Activated naive CD4-positive, alpha-beta T cell treated with anti-CD3 and anti-CD28 coated beads for 36 hours (primary cell): ENCODE measurements at regions of chr11 and their contacts with region 1.

Region 1: DNA sequence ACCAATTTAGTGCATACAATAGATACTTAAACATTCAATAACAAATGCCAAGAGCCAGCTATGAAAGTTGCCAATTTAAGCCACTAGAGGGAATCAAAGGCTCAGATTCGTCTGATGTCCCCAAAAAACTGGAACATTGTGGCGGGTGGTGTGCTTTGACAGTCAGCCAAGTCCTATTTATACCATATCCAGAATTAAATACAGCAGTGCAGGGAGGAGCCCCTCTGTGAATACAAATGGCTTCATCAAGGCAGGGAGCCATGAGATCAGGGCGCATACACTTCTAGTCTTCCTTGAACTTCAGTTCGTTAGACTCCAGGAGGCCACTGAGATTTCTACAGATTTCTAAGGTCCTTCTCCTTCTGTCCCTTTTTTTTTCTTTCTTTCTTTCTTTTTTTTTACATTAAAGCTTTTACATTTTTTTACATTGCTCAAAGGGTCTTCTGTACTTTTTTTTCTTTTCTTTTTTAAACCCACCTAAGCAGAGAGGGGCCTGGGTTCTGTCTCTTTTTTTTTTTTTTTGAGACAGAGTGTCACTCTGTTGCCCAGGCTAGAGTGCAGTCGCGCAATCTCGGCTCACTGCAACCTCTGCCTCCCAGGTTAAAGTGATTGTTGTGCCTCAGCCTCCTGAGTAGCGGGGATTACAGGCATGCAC is 41.5 kb upstream of the HSPA8 start:
- DNase-seq: peak; percentile 55
- H3K4me3 Mint-ChIP-seq: no peak overlapping the region
- H3K27ac Mint-ChIP-seq: no peak overlapping the region
- H3K4me1 Mint-ChIP-seq: peaks cover 30% of the 10 kb centered on the region
- H3K27me3 Mint-ChIP-seq: no peaks in the 10 kb centered on the region

Region 2: GRCh38 chr11:123083623-123084029 is 19.8 kb before region 1 on chr11:
- CTCF ChIA-PET with region 1: interaction called, 21 read pairs
- intact Hi-C with region 1: loop called (anchors 1 kb)
- DNase-seq: peak; percentile 92
- H3K4me3 Mint-ChIP-seq: peak overlapping the region; percentile 45
- H3K27ac Mint-ChIP-seq: peak overlapping the region; percentile 73
- H3K4me1 Mint-ChIP-seq: peaks cover 71% of the 10 kb centered on the region
- H3K27me3 Mint-ChIP-seq: no peaks in the 10 kb centered on the region

Region 3: GRCh38 chr11:123091506-123091905 is 11.9 kb before region 1 on chr11:
- CTCF ChIA-PET with region 1: interaction called, 27 read pairs
- intact Hi-C with region 1: loop called (anchors 1 kb)
- DNase-seq: no peak
- H3K4me3 Mint-ChIP-seq: no peak overlapping the region
- H3K27ac Mint-ChIP-seq: no peak overlapping the region
- H3K4me1 Mint-ChIP-seq: peaks cover 20% of the 10 kb centered on the region
- H3K27me3 Mint-ChIP-seq: no peaks in the 10 kb centered on the region

Region 4: GRCh38 chr11:123261345-123262106 is 158.1 kb after region 1 on chr11:
- CTCF ChIA-PET with region 1: interaction called, 41 read pairs
- intact Hi-C with region 1: no loop called
- DNase-seq: peak; percentile 83
- H3K4me3 Mint-ChIP-seq: no peak overlapping the region
- H3K27ac Mint-ChIP-seq: no peak overlapping the region
- H3K4me1 Mint-ChIP-seq: peaks cover 7% of the 10 kb centered on the region
- H3K27me3 Mint-ChIP-seq: peaks cover 23% of the 10 kb centered on the region

Region 5: GRCh38 chr11:123570939-123571580 is 467.6 kb after region 1 on chr11:
- CTCF ChIA-PET with region 1: no interaction called
- intact Hi-C with region 1: no loop called
- DNase-seq: no peak
- H3K4me3 Mint-ChIP-seq: no peak overlapping the region
- H3K27ac Mint-ChIP-seq: no peak overlapping the region
- H3K4me1 Mint-ChIP-seq: no peaks in the 10 kb centered on the region
- H3K27me3 Mint-ChIP-seq: no peaks in the 10 kb centered on the region